ENCODE measurements at regions of chr4 and their contacts with region 1.

Region 1: DNA sequence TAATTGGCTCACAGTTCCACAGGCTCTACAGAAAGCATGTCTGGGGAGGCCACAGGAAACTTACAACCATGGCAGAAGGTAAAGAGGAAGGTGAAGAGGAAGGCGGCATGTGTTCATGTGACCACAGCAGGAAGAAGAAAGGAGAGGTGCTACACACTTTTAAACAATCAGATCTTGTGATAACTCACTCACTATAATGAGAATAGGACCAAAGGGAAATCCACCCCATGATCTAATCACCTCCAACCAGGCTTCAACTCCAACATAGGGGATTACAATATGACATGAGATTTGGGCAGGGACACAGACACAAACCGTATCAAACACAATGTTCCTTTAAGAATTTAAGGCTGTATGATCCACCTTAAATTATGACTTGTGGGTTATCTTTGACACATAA is 10.5 kb upstream of the PGM2 start:
- DNase-seq: peak in 5 of 9 donors; percentile 8 to 39 (median 33)
- ATAC-seq: peak; percentile 68
- H3K4me3 ChIP-seq: no peak overlapping the region
- H3K4me3 Mint-ChIP-seq: peak overlapping the region; percentile 42 to 85 (median 72)
- H3K27ac ChIP-seq: peak overlapping the region; percentile 9
- H3K27ac Mint-ChIP-seq: peak overlapping the region; percentile 59 to 92 (median 87)
- H3K4me1 ChIP-seq: peaks cover 17 to 19% of the 10 kb centered on the region in 2 donors
- H3K4me1 Mint-ChIP-seq: peaks cover 15 to 29% (median 21%) of the 10 kb centered on the region in 7 donors
- H3K27me3 ChIP-seq: no peaks in the 10 kb centered on the region
- H3K27me3 Mint-ChIP-seq: peaks cover 0 to 3% (median 0%) of the 10 kb centered on the region in 5 donors

Region 2: GRCh38 chr4:37826295-37827029 is 10.5 kb after region 1 on chr4 and contains the start of gene PGM2:
- CTCF ChIA-PET with region 1: no interaction called
- POLR2A ChIA-PET with region 1: interaction called, 3 read pairs
- intact Hi-C with region 1: loop called in 1 of 2 experiments (anchors 1 kb)
- DNase-seq: peak; percentile 84 to 94 (median 90)
- ATAC-seq: peak; percentile 99
- H3K4me3 ChIP-seq: peak within 1 kb of the TSS; percentile 79
- H3K4me3 Mint-ChIP-seq: peak within 1 kb of the TSS; percentile 93 to 100 (median 98)
- H3K27ac ChIP-seq: peak within 1 kb of the TSS; percentile 80
- H3K27ac Mint-ChIP-seq: peak within 1 kb of the TSS; percentile 92 to 99 (median 96)
- H3K4me1 ChIP-seq: peaks cover 7 to 11% of the 10 kb centered on the region in 2 donors
- H3K4me1 Mint-ChIP-seq: peaks cover 34 to 70% (median 55%) of the 10 kb centered on the region in 7 donors
- H3K27me3 ChIP-seq: no peaks in the 10 kb centered on the region
- H3K27me3 Mint-ChIP-seq: peaks cover 0 to 5% (median 0%) of the 10 kb centered on the region in 5 donors
- total RNA-seq, gene PGM2: 14.4 to 35.2 (median 18.7) TPM